ENCODE measurements at regions of chr20 and their contacts with region 1.

Region 1: GRCh38 chr20:45456632-45457031 is 12.9 kb upstream of the WFDC2 start:
- DNase-seq: peak; percentile 40
- H3K4me3 ChIP-seq: no peak overlapping the region
- H3K27ac ChIP-seq: no peak overlapping the region
- H3K4me1 ChIP-seq: no peaks in the 10 kb centered on the region
- H3K27me3 ChIP-seq: no peaks in the 10 kb centered on the region
- CTCF ChIP-seq: peak; percentile 52 to 63

Region 2: GRCh38 chr20:45392733-45393132 is 63.9 kb before region 1 on chr20:
- CTCF ChIA-PET with region 1: no interaction called
- dilution Hi-C with region 1: loop called (anchors 5 kb)
- in situ Hi-C with region 1: no loop called
- intact Hi-C with region 1: no loop called
- DNase-seq: no peak
- H3K4me3 ChIP-seq: no peak overlapping the region
- H3K27ac ChIP-seq: no peak overlapping the region
- H3K4me1 ChIP-seq: no peaks in the 10 kb centered on the region
- H3K27me3 ChIP-seq: no peaks in the 10 kb centered on the region
- CTCF ChIP-seq: peak in 1 of 2 donors; percentile 29

Region 3: DNA sequence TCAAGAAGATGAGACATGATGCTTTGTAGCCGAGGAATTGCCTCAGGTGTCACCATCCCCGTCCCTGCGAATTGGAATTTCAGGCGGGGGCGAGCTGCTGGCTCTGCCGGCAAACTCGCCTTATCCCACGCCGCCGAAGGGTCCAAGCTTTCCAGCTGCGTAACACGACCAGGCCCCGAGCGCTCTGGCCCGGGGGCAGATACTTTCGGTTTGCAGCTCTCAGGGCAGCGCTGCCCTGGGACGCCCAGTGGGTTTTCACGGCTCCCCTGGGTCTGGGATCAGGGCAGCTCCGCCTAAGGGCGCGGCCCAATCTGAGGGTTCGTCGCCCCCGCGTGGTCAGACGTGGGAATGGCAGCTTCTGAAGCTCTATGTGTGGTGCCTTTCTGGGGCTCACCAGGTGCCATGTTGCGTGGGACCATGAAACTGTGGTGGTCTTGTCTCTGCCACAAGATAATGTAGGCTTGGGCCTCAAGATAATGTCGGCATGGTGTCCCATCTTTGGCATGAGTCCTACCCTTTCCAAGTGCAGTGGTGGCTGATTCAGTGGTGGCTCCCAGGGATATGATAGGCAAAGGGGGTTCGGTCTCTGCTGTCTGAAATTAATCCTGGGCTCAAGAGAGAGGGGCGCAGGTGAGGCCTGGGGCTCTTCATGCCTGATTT is 19.8 kb before region 1 on chr20:
- CTCF ChIA-PET with region 1: no interaction called
- dilution Hi-C with region 1: no loop called
- in situ Hi-C with region 1: no loop called
- intact Hi-C with region 1: no loop called
- DNase-seq: peak; percentile 70
- H3K4me3 ChIP-seq: peak overlapping the region; percentile 62 to 80 (median 72)
- H3K27ac ChIP-seq: no peak overlapping the region
- H3K4me1 ChIP-seq: no peaks in the 10 kb centered on the region
- H3K27me3 ChIP-seq: no peaks in the 10 kb centered on the region
- CTCF ChIP-seq: peak; percentile 88 to 98

Region 4: GRCh38 chr20:45518282-45518681 is 61.6 kb after region 1 on chr20:
- CTCF ChIA-PET with region 1: no interaction called
- dilution Hi-C with region 1: loop called (anchors 5 kb)
- in situ Hi-C with region 1: no loop called
- intact Hi-C with region 1: no loop called
- DNase-seq: peak; percentile 97
- H3K4me3 ChIP-seq: no peak overlapping the region
- H3K27ac ChIP-seq: peak overlapping the region; percentile 71
- H3K4me1 ChIP-seq: peaks cover 19% of the 10 kb centered on the region
- H3K27me3 ChIP-seq: no peaks in the 10 kb centered on the region
- CTCF ChIP-seq: no peak

Region 5: DNA sequence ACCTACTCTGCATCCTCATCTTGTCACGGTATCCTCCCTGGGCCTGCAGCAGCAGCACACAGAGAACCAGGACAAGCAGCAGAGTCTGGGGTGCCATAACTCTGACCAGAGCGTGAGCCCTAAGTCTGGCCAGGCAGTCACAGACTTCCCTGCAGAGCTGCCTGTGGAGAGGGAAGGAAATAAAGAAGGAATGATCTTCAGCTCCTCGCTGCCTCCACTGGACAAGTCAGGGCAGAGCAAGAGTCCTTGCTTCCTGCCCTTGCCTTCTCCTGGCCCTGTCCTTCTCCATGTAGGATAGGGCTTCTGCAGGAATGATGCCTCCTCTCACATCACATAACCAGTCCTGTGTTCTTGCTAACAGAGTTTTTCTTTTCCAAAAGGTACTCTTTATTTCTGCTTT is 229.3 kb after region 1 on chr20:
- CTCF ChIA-PET with region 1: interaction called, 10 read pairs
- dilution Hi-C with region 1: no loop called
- in situ Hi-C with region 1: no loop called
- intact Hi-C with region 1: no loop called
- DNase-seq: peak; percentile 21
- H3K4me3 ChIP-seq: no peak overlapping the region
- H3K27ac ChIP-seq: no peak overlapping the region
- H3K4me1 ChIP-seq: peaks cover 5% of the 10 kb centered on the region
- H3K27me3 ChIP-seq: no peaks in the 10 kb centered on the region
- CTCF ChIP-seq: peak; percentile 31 to 42